Common myeloid progenitor, CD34-positive (primary cell): ENCODE measurements at regions of chr19 and their contacts with region 1.

Region 1: GRCh38 chr19:48674921-48675824 is 2.4 kb upstream of the NTN5 start:
- DNase-seq: peak; percentile 72 to 87 (median 81)
- H3K4me3 ChIP-seq: no peak overlapping the region
- H3K27ac ChIP-seq: no peak overlapping the region
- H3K4me1 ChIP-seq: peaks cover 0 to 6% (median 0%) of the 10 kb centered on the region in 4 experiments
- H3K27me3 ChIP-seq: no peaks in the 10 kb centered on the region

Region 2: GRCh38 chr19:48608798-48609263 is 66.3 kb before region 1 on chr19:
- CTCF ChIA-PET with region 1: no interaction called
- POLR2A ChIA-PET with region 1: no interaction called
- DNase-seq: peak; percentile 74 to 82 (median 81)
- H3K4me3 ChIP-seq: peak overlapping the region in 4 of 7 experiments; percentile 20 to 70 (median 54)
- H3K27ac ChIP-seq: no peak overlapping the region
- H3K4me1 ChIP-seq: peaks cover 0 to 8% (median 0%) of the 10 kb centered on the region in 4 experiments
- H3K27me3 ChIP-seq: no peaks in the 10 kb centered on the region

Region 3: DNA sequence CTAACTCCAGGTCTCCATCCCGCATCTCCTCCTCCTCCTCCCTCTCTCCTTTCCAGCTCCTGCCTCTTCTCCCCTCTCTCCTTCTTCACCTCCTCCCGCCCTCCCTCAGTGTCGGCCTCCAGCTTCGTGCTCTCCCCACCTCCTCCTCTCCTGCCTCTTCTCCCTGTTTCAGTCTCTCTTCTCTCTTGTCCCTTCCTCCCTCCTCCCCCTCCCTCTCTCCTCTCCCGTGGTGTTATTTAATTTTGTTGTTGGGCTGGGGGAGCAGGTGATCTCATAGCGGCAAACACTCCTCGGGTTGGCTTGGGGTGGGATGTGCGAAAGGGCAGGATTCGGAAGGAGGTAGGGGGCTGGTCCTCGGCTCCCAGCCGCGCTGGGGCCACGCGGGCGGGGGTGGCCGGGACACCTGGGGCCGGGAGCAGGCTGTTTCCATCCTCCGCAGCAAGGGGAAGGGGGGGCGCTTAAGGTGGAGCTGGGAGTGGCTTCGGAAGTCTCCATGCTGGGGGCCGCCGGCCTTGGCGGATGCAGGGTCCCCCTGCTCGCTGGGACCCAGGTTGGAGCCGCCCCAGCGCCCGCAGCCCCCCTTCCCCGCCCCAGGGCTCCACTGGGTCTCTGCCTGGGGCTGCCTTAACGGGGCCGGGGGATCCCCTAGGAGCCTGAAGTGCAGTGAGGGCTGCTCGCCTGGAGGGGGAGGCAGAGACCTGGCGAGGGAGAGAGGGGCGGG is 29.0 kb before region 1 on chr19 and contains the start of gene CA11:
- CTCF ChIA-PET with region 1: interaction called, 40 read pairs
- POLR2A ChIA-PET with region 1: no interaction called
- DNase-seq: peak; percentile 87 to 94 (median 94)
- H3K4me3 ChIP-seq: peak within 1 kb of the TSS; percentile 47 to 82 (median 59)
- H3K27ac ChIP-seq: peak within 1 kb of the TSS in 1 of 2 experiments; percentile 61
- H3K4me1 ChIP-seq: peaks cover 3 to 27% (median 22%) of the 10 kb centered on the region in 4 experiments
- H3K27me3 ChIP-seq: no peaks in the 10 kb centered on the region

Region 4: GRCh38 chr19:48656840-48657474 is 18.2 kb before region 1 on chr19:
- CTCF ChIA-PET with region 1: interaction called, 19 read pairs
- POLR2A ChIA-PET with region 1: interaction called, 3 read pairs
- DNase-seq: no peak
- H3K4me3 ChIP-seq: no peak overlapping the region
- H3K27ac ChIP-seq: no peak overlapping the region
- H3K4me1 ChIP-seq: peaks cover 0 to 26% (median 15%) of the 10 kb centered on the region in 4 experiments
- H3K27me3 ChIP-seq: no peaks in the 10 kb centered on the region

Region 5: GRCh38 chr19:48698046-48698445 is 22.9 kb after region 1 on chr19:
- CTCF ChIA-PET with region 1: interaction called, 18 read pairs
- POLR2A ChIA-PET with region 1: no interaction called
- DNase-seq: peak; percentile 67 to 86 (median 85)
- H3K4me3 ChIP-seq: peak overlapping the region in 1 of 7 experiments; percentile 38
- H3K27ac ChIP-seq: no peak overlapping the region
- H3K4me1 ChIP-seq: peaks cover 0 to 26% (median 22%) of the 10 kb centered on the region in 4 experiments
- H3K27me3 ChIP-seq: no peaks in the 10 kb centered on the region

Region 6: DNA sequence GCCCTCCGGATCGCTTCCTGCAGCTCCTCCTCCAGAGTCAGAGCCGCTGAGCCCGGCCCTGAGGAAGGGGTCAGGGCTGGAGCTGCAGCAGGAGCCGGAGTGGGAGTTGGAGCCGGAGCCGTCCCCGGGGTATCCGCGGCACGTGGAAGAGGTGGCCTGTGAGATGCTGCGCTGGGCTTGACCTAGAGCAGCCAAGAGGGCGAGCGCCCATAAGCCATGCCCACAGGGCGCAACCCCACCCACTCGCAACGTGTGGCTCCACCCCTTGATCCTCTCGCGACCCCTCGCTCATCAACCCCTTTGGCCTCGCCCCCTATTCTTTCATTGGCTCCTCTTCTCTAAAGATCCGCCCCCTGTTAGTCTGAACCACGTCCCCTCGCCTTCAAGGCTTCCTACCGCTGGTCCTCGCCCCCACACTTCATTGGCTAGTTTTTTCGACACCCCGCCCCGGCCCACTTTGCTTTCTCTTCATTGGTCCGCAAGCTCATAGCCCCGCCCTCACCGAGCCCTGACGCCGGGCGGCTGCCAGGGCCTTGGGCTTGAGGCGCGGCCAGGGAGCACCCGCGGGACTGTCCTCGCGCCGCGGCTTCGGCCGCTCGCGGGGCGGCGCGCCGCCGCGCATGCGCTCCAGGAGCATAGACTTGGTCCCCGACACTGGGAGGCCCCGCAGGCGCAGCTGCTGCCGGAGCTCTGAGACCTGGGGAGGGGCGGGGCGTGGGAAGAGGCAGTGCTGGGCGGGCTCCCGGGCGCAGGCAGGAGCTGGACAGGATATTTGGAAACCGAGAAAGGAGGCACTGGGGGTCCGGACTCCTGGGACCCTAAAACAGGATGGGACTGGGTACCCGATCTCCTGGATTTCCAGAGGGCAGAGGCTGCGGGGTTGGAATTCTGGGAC is 38.9 kb after region 1 on chr19:
- CTCF ChIA-PET with region 1: interaction called, 16 read pairs
- POLR2A ChIA-PET with region 1: no interaction called
- DNase-seq: peak; percentile 100
- H3K4me3 ChIP-seq: peak overlapping the region; percentile 69 to 92 (median 76)
- H3K27ac ChIP-seq: peak overlapping the region; percentile 54 to 84
- H3K4me1 ChIP-seq: peaks cover 0 to 21% (median 19%) of the 10 kb centered on the region in 4 experiments
- H3K27me3 ChIP-seq: no peaks in the 10 kb centered on the region

Region 7: GRCh38 chr19:48784540-48784939 is 109.4 kb after region 1 on chr19:
- CTCF ChIA-PET with region 1: interaction called, 13 read pairs
- POLR2A ChIA-PET with region 1: no interaction called
- DNase-seq: peak in 2 of 3 donors; percentile 48 to 69
- H3K4me3 ChIP-seq: no peak overlapping the region
- H3K27ac ChIP-seq: no peak overlapping the region
- H3K4me1 ChIP-seq: peaks cover 0 to 7% (median 3%) of the 10 kb centered on the region in 4 experiments
- H3K27me3 ChIP-seq: no peaks in the 10 kb centered on the region